GM10248 (cell line): ENCODE measurements at regions of chr11 and their contacts with region 1.

Region 1: DNA sequence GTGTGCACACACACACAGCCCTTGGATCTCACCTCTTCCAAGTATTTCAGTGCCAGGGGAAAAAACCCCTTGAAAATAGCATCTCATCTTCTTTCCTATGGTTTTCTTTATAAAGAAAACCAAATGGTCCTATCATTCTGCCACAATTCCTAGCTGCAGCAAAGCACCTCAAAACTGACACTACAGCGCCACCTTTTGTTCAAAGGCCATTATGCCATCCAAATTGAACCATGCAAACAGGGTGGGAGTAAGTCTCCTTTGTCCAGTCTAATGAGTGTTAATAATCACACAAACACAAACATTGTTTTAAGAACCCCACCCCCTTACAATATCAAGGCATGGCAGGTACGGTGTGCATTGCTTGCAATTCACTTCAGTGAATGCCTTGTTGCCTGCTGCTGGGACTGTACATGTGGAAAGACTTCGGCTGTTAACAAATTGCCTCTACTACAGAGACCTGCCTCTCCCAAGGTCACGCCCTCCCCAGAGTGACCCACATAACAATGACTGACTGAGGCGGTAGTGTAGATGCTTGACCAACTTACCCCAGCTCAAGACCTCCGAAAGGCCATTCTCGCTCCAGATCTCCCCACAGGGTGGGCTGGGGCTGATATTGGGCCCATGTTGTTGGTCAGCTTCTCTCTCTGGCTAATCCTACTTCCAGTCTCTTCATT is 31.7 kb downstream of the FAM181B start:
- DNase-seq: peak; percentile 29
- CTCF ChIP-seq: peak; percentile 64

Region 2: GRCh38 chr11:81644239-81644840 is 1057.6 kb before region 1 on chr11:
- CTCF ChIA-PET with region 1: interaction called, 17 read pairs
- POLR2A ChIA-PET with region 1: no interaction called
- DNase-seq: peak; percentile 29
- CTCF ChIP-seq: peak; percentile 45

Region 3: GRCh38 chr11:82610671-82611070 is 91.3 kb before region 1 on chr11:
- CTCF ChIA-PET with region 1: no interaction called
- POLR2A ChIA-PET with region 1: no interaction called
- DNase-seq: no peak
- CTCF ChIP-seq: no peak

Region 4: GRCh38 chr11:82676473-82677094 is 25.4 kb before region 1 on chr11:
- CTCF ChIA-PET with region 1: interaction called, 16 read pairs
- POLR2A ChIA-PET with region 1: no interaction called
- DNase-seq: no peak
- CTCF ChIP-seq: peak; percentile 34

Region 5: GRCh38 chr11:82718307-82718706 is 16.3 kb after region 1 on chr11:
- CTCF ChIA-PET with region 1: interaction called, 26 read pairs
- POLR2A ChIA-PET with region 1: no interaction called
- DNase-seq: peak; percentile 47
- CTCF ChIP-seq: peak; percentile 58

Region 6: DNA sequence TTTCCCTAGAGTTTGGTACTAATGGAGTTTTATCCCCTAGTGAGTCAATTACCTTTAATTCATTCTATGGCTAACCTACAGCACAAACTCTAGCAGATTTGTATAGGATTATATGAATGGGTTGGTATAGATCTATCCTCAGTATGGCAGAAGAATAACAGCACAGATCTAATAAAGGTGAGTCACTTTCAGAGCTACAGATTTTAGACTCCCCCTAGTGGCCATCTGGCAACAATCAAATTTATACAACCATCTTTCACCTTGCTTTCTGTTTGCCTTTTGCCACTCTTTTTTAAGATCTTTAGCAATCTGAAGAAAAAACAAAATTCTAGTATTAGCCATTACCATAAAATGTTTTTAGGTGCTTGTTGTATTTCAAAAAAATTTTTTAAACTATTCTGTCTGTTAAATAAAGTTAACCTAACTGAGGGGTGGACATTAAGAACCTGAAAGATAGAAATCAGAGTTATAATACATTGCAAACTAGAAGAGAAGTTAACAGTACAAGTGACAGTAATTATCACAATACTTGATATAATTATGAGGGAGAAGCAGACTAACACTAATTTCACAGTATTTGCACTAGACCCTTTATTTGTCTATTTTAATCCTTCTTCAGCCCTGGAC is 225.4 kb after region 1 on chr11:
- CTCF ChIA-PET with region 1: no interaction called
- POLR2A ChIA-PET with region 1: no interaction called
- DNase-seq: peak; percentile 57
- CTCF ChIP-seq: peak; percentile 60